Activated CD4-positive, alpha-beta T cell treated with anti-CD3 and anti-CD28 coated beads for 36 hours (primary cell): ENCODE measurements at regions of chr12 and their contacts with region 1.

Region 1: GRCh38 chr12:53180220-53180930 is at the starts of genes CSAD and ZNF740:
- DNase-seq: peak; percentile 99
- ATAC-seq: peak; percentile 94
- H3K4me3 Mint-ChIP-seq: peak within 1 kb of the TSS; percentile 98
- H3K27ac Mint-ChIP-seq: peak within 1 kb of the TSS; percentile 98
- H3K4me1 Mint-ChIP-seq: peaks cover 60% of the 10 kb centered on the region
- H3K27me3 Mint-ChIP-seq: no peaks in the 10 kb centered on the region
- total RNA-seq, gene CSAD: 20.0 to 23.1 TPM
- total RNA-seq, gene ZNF740: 34.9 to 40.2 TPM

Region 2: GRCh38 chr12:53159195-53159839 is 21.1 kb before region 1 on chr12:
- CTCF ChIA-PET with region 1: interaction called, 94 read pairs
- POLR2A ChIA-PET with region 1: interaction called, 4 read pairs
- intact Hi-C with region 1: loop called in 1 of 2 experiments (anchors 1 kb)
- DNase-seq: peak; percentile 96
- ATAC-seq: peak; percentile 99
- H3K4me3 Mint-ChIP-seq: peak overlapping the region; percentile 27
- H3K27ac Mint-ChIP-seq: peak overlapping the region; percentile 81
- H3K4me1 Mint-ChIP-seq: peaks cover 11% of the 10 kb centered on the region
- H3K27me3 Mint-ChIP-seq: no peaks in the 10 kb centered on the region

Region 3: GRCh38 chr12:53220801-53221202 is 40.4 kb after region 1 on chr12:
- CTCF ChIA-PET with region 1: interaction called, 3 read pairs
- POLR2A ChIA-PET with region 1: interaction called, 3 read pairs
- intact Hi-C with region 1: loop called (anchors 1 kb)
- DNase-seq: peak; percentile 93
- ATAC-seq: peak; percentile 57
- H3K4me3 Mint-ChIP-seq: peak overlapping the region; percentile 83
- H3K27ac Mint-ChIP-seq: peak overlapping the region; percentile 87
- H3K4me1 Mint-ChIP-seq: peaks cover 78% of the 10 kb centered on the region
- H3K27me3 Mint-ChIP-seq: no peaks in the 10 kb centered on the region

Region 4: DNA sequence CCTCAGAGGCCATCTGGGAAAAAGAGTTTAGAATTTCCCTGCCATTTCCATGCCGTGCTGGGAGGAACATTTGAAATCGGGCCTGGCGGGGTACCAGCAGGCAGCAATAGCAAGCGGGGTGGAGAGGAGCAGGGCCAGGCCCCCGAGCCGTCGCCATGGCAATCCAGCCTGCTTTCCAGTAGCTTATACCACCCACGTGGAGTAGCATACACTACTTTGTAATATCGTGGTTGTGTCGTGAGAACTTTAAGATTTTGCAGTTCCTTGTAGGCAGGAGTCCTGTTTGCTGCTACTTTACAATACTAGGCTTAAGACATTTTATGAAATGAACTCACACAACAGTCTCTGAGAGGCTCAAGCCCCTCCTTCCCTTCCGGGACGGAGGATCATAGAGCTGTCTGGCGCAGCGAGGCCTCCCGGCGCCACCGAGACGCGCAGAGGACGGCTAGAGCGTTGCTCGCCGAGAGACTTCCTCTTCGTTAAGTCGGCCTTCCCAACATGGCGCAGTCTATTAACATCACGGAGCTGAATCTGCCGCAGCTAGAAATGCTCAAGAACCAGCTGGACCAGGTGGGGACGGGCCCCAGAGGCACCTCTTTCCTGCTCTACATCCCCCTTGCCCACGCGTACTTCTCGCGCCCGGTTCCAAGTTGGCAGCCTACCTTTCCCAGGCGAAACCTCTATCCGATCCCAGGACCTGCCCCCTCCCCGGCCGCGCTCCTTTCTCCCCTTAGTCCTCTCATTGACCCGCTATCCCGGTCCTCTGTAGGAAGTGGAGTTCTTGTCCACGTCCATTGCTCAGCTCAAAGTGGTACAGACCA is 114.9 kb after region 1 on chr12 and contains the start of gene PFDN5:
- CTCF ChIA-PET with region 1: interaction called, 5 read pairs
- POLR2A ChIA-PET with region 1: interaction called, 4 read pairs
- intact Hi-C with region 1: loop called in 1 of 2 experiments (anchors 1 kb)
- DNase-seq: peak; percentile 93
- ATAC-seq: peak; percentile 88
- H3K4me3 Mint-ChIP-seq: peak within 1 kb of the TSS; percentile 85
- H3K27ac Mint-ChIP-seq: peak within 1 kb of the TSS; percentile 94
- H3K4me1 Mint-ChIP-seq: peaks cover 52% of the 10 kb centered on the region
- H3K27me3 Mint-ChIP-seq: no peaks in the 10 kb centered on the region
- total RNA-seq, gene PFDN5: 253 to 322 TPM

Region 5: DNA sequence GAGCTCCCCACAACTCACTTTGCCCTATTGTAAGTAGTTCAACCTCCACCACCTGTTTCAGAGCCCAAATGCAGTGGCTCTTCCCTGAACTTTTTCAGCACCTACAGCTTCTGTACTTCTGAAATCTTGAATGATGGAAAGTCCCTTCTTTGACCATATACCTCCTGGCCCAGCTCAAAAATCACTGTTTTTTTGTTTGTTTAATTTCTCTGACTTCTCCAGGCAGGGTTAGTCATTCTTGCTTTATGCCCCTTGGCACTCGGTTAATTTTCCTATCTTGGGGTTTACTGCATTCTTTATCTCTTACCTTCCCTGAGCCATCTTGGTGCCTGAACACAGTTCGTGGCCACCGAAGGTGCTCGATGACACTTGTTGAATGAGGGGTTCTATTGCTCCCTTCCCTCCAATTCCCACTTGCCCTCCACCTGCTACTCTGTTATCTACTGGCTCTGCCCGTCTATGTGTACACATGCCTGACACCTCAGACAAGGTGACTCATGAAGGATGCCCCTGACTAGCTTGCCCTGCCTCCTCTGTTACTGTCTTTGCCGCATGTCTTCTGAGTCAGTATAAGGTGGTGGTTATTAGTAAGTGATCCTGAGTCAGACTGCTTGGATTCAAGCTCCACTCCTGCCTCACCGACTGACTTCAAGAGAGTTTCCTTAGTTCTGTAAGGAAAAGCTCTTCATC is 247.7 kb after region 1 on chr12:
- CTCF ChIA-PET with region 1: no interaction called
- POLR2A ChIA-PET with region 1: no interaction called
- intact Hi-C with region 1: no loop called
- DNase-seq: peak; percentile 70
- ATAC-seq: peak; percentile 100
- H3K4me3 Mint-ChIP-seq: no peak overlapping the region
- H3K27ac Mint-ChIP-seq: peak overlapping the region; percentile 5
- H3K4me1 Mint-ChIP-seq: peaks cover 14% of the 10 kb centered on the region
- H3K27me3 Mint-ChIP-seq: no peaks in the 10 kb centered on the region

Region 6: GRCh38 chr12:53451661-53452158 is 271.3 kb after region 1 on chr12 and contains the start of gene PCBP2:
- CTCF ChIA-PET with region 1: interaction called, 4 read pairs
- POLR2A ChIA-PET with region 1: no interaction called
- intact Hi-C with region 1: loop called in 1 of 2 experiments (anchors 1 kb)
- DNase-seq: peak; percentile 99
- ATAC-seq: peak; percentile 97
- H3K4me3 Mint-ChIP-seq: peak within 1 kb of the TSS; percentile 94
- H3K27ac Mint-ChIP-seq: peak within 1 kb of the TSS; percentile 96
- H3K4me1 Mint-ChIP-seq: peaks cover 27% of the 10 kb centered on the region
- H3K27me3 Mint-ChIP-seq: no peaks in the 10 kb centered on the region
- total RNA-seq, gene PCBP2: 881 to 999 TPM

Region 7: DNA sequence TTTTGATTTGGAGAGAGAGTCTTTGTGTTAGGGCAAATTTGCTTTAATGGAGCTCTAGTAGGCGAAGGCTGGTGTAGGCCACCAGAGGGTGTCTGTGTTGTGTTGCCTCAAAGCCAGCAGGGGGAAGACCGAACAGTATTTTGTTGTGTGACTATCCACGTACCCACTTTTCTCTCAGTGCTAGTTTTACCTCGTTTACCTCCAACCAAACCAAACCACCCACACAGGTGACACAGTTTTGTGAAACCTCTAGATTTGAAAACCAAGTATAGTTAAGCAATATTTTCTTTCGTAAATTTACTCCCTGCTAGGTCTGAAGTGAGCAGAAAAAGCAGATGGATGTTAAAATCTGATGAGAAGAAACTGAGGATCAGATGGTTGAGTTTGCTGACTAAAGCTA is 363.2 kb after region 1 on chr12:
- CTCF ChIA-PET with region 1: no interaction called
- POLR2A ChIA-PET with region 1: no interaction called
- intact Hi-C with region 1: no loop called
- DNase-seq: peak; percentile 79
- ATAC-seq: peak; percentile 99
- H3K4me3 Mint-ChIP-seq: no peak overlapping the region
- H3K27ac Mint-ChIP-seq: peak overlapping the region; percentile 78
- H3K4me1 Mint-ChIP-seq: peaks cover 20% of the 10 kb centered on the region
- H3K27me3 Mint-ChIP-seq: no peaks in the 10 kb centered on the region

Region 8: DNA sequence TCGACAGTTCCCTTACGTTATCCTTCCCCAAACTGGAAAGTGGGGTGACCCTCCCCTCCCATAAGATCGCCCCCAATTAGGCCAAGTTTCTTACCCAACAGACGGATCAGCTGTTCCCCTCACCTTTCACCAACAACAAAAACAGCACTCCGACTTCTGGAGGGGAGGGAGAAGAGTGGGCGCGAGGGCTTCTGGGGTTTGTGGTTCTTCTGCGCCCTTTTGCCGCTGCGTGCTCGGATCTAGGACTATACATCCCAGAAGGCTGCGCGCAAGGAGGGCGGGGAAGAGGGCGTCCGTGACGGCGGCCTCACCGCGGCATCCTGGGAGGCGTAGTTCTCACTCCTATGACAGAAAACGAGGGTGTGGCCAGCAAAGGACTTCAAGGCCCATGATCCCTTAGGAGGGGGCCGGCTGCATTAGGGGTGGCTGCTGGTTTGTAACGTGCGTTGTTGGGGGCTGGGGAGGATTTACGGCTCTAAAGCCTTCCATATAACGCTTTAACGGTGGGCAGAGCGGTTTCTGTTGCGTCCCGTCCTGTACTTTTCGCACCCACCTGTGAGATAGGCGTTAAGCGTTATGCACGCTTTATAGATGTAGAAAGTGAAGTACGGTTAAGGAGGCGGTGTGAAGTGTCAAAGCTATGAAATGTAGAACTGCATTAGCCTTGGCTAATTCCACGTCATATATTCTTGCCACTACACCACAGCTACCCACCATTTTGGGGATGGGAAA is 547.1 kb after region 1 on chr12 and contains the start of gene CALCOCO1:
- CTCF ChIA-PET with region 1: no interaction called
- POLR2A ChIA-PET with region 1: no interaction called
- intact Hi-C with region 1: loop called in 1 of 2 experiments (anchors 5 kb)
- DNase-seq: peak; percentile 99
- ATAC-seq: peak; percentile 99
- H3K4me3 Mint-ChIP-seq: peak within 1 kb of the TSS; percentile 80
- H3K27ac Mint-ChIP-seq: peak within 1 kb of the TSS; percentile 73
- H3K4me1 Mint-ChIP-seq: peaks cover 20% of the 10 kb centered on the region
- H3K27me3 Mint-ChIP-seq: no peaks in the 10 kb centered on the region
- total RNA-seq, gene CALCOCO1: 17.1 to 20.4 TPM